Calu3 (cell line): ENCODE measurements at regions of chr13 and their contacts with region 1.

Region 1: DNA sequence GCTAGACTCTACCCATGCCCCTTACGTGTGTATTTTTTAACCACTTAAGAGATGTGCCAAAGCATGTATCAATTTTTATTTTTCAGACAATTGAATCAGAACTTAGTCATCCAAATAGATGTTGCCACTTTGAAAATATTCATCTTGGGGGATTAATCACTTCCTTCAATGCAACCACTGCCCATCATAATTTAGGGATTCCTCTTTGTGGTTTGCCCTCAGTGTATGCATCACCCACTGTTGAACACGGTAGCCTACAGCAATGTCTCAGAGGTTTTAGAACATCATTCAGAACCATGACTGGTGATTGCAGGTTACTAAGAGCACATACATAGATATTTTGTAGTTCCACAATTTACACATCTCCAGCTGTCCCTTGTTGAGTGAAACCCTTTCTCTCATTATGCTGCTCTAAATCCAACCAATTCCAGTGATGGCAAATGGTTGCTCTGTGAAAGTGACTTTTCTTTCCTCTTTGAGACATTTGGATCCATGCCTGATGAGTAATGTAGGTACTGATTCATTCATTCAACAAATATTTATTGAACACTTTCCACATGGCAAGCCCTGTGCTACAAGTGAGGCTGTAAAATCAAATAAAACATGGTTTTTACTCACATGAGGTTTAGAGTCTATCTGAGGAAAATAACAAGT is 60.6 kb upstream of the SERP2 start:
- DNase-seq: peak; percentile 8
- H3K4me3 Mint-ChIP-seq: peak overlapping the region; percentile 23
- H3K27ac Mint-ChIP-seq: peak overlapping the region; percentile 88
- H3K4me1 Mint-ChIP-seq: peaks cover 37% of the 10 kb centered on the region
- H3K27me3 Mint-ChIP-seq: no peaks in the 10 kb centered on the region
- CTCF ChIP-seq: no peak

Region 2: DNA sequence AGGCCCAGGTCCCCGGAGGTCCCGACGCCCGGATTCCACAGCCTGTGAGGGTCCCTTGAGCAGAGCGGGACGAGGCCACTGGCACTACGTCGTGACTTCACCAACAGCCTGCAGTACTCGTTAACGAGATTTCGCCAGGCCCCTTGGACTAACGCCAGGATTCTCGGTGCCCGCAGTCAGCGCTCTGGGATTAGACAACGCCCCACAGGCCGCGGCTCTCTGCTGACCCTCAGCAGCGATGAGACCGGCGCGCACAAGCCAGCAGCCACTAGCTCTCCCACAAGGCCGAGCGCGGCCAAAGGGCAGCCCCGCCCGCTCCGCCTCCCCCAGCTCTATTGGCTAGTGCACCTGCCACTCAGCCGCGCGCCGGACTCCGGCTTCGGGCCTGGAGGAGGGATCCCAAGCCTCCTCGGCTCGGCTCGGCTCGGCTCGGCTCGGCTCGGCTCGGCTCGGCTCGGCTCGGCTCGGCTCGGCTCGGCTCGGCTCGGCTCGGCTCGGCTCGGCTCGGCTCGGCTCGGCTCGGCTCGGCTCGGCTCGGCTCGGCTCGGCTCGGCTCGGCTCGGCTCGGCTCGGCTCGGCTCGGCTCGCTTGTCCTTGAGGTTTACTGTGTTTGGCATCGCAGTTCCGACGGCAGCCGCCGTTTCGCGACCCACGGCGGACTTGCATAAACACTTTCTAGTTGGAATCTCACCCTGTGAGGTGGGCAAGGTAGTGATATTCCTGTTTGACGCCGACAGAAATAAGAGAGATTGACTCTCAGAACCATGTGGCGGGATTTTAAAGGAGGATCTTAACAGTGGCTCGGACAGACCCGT is 171.1 kb before region 1 on chr13:
- CTCF ChIA-PET with region 1: no interaction called
- intact Hi-C with region 1: loop called (anchors 10 kb)
- DNase-seq: peak; percentile 97
- H3K4me3 Mint-ChIP-seq: peak overlapping the region; percentile 75
- H3K27ac Mint-ChIP-seq: peak overlapping the region; percentile 85
- H3K4me1 Mint-ChIP-seq: peaks cover 20% of the 10 kb centered on the region
- H3K27me3 Mint-ChIP-seq: no peaks in the 10 kb centered on the region
- CTCF ChIP-seq: no peak

Region 3: GRCh38 chr13:44231786-44232516 is 81.1 kb before region 1 on chr13:
- CTCF ChIA-PET with region 1: no interaction called
- intact Hi-C with region 1: loop called (anchors 5 kb)
- DNase-seq: peak; percentile 86
- H3K4me3 Mint-ChIP-seq: peak overlapping the region; percentile 52
- H3K27ac Mint-ChIP-seq: no peak overlapping the region
- H3K4me1 Mint-ChIP-seq: peaks cover 7% of the 10 kb centered on the region
- H3K27me3 Mint-ChIP-seq: no peaks in the 10 kb centered on the region
- CTCF ChIP-seq: no peak

Region 4: GRCh38 chr13:44364348-44365049 is 51.5 kb after region 1 on chr13:
- CTCF ChIA-PET with region 1: no interaction called
- intact Hi-C with region 1: loop called (anchors 5 kb)
- DNase-seq: peak; percentile 21
- H3K4me3 Mint-ChIP-seq: no peak overlapping the region
- H3K27ac Mint-ChIP-seq: peak overlapping the region; percentile 85
- H3K4me1 Mint-ChIP-seq: peaks cover 62% of the 10 kb centered on the region
- H3K27me3 Mint-ChIP-seq: no peaks in the 10 kb centered on the region
- CTCF ChIP-seq: no peak